K562 (cell line): ENCODE measurements at regions of chr15 and their contacts with region 1.

Region 1: GRCh38 chr15:56245871-56246814 is 2.5 kb upstream of the RFX7 start:
- DNase-seq: peak; percentile 79 to 94 (median 82)
- ATAC-seq: peak; percentile 79
- H3K4me3 ChIP-seq: peak overlapping the region; percentile 78
- H3K27ac ChIP-seq: peak overlapping the region; percentile 86
- H3K4me1 ChIP-seq: peaks cover 16 to 29% of the 10 kb centered on the region in 2 experiments
- H3K27me3 ChIP-seq: no peaks in the 10 kb centered on the region
- CTCF ChIP-seq: peak; percentile 100
- EP300 ChIP-seq: peak; percentile 66
- POLR2A ChIP-seq: peak; percentile 82
- RAD21 ChIP-seq: peak; percentile 94 to 96

Region 2: GRCh38 chr15:55564347-55565145 is 681.6 kb before region 1 on chr15:
- CTCF ChIA-PET with region 1: no interaction called
- POLR2A ChIA-PET with region 1: no interaction called
- in situ Hi-C with region 1: no loop called
- intact Hi-C with region 1: no loop called
- DNase-seq: peak in 1 of 4 experiments; percentile 10
- ATAC-seq: peak; percentile 87
- H3K4me3 ChIP-seq: no peak overlapping the region
- H3K27ac ChIP-seq: no peak overlapping the region
- H3K4me1 ChIP-seq: no peaks in the 10 kb centered on the region
- H3K27me3 ChIP-seq: no peaks in the 10 kb centered on the region
- CTCF ChIP-seq: peak; percentile 13 to 41 (median 32); a peak in 2 of 6 replicates
- EP300 ChIP-seq: no peak
- POLR2A ChIP-seq: no peak
- RAD21 ChIP-seq: no peak

Region 3: GRCh38 chr15:55789066-55789660 is 457.0 kb before region 1 on chr15:
- CTCF ChIA-PET with region 1: no interaction called
- POLR2A ChIA-PET with region 1: no interaction called
- in situ Hi-C with region 1: no loop called
- intact Hi-C with region 1: loop called (anchors 10 kb)
- DNase-seq: peak; percentile 59 to 72 (median 69)
- ATAC-seq: peak; percentile 95
- H3K4me3 ChIP-seq: no peak overlapping the region
- H3K27ac ChIP-seq: no peak overlapping the region
- H3K4me1 ChIP-seq: no peaks in the 10 kb centered on the region
- H3K27me3 ChIP-seq: no peaks in the 10 kb centered on the region; a peak in 1 of 5 replicates
- CTCF ChIP-seq: peak; percentile 66 to 92 (median 72)
- EP300 ChIP-seq: no peak
- POLR2A ChIP-seq: no peak
- RAD21 ChIP-seq: peak in 1 of 2 experiments; percentile 58; a peak in 2 of 4 replicates

Region 4: GRCh38 chr15:55993111-55993803 is 252.9 kb before region 1 on chr15 and contains the start of gene NEDD4:
- CTCF ChIA-PET with region 1: no interaction called
- POLR2A ChIA-PET with region 1: interaction called, 5 read pairs
- in situ Hi-C with region 1: no loop called
- intact Hi-C with region 1: loop called (anchors 5 kb)
- DNase-seq: peak; percentile 83 to 93 (median 87)
- ATAC-seq: peak; percentile 95
- H3K4me3 ChIP-seq: peak within 1 kb of the TSS; percentile 85
- H3K27ac ChIP-seq: peak within 1 kb of the TSS; percentile 85
- H3K4me1 ChIP-seq: peaks cover 3 to 18% of the 10 kb centered on the region in 2 experiments; a peak in 4 of 5 replicates
- H3K27me3 ChIP-seq: no peaks in the 10 kb centered on the region
- CTCF ChIP-seq: peak; percentile 49 to 71 (median 63)
- EP300 ChIP-seq: no peak
- POLR2A ChIP-seq: peak; percentile 82
- RAD21 ChIP-seq: no peak; a peak in 1 of 4 replicates
- polyA plus RNA-seq, gene NEDD4: 7.2 to 12.2 TPM

Region 5: GRCh38 chr15:56098195-56098863 is 147.8 kb before region 1 on chr15:
- CTCF ChIA-PET with region 1: no interaction called
- POLR2A ChIA-PET with region 1: no interaction called
- in situ Hi-C with region 1: no loop called
- intact Hi-C with region 1: loop called (anchors 10 kb)
- DNase-seq: no peak
- ATAC-seq: no peak
- H3K4me3 ChIP-seq: no peak overlapping the region
- H3K27ac ChIP-seq: no peak overlapping the region
- H3K4me1 ChIP-seq: no peaks in the 10 kb centered on the region
- H3K27me3 ChIP-seq: no peaks in the 10 kb centered on the region
- CTCF ChIP-seq: peak in 1 of 3 experiments; percentile 19; a peak in 1 of 6 replicates
- EP300 ChIP-seq: no peak
- POLR2A ChIP-seq: no peak
- RAD21 ChIP-seq: peak; percentile 37

Region 6: DNA sequence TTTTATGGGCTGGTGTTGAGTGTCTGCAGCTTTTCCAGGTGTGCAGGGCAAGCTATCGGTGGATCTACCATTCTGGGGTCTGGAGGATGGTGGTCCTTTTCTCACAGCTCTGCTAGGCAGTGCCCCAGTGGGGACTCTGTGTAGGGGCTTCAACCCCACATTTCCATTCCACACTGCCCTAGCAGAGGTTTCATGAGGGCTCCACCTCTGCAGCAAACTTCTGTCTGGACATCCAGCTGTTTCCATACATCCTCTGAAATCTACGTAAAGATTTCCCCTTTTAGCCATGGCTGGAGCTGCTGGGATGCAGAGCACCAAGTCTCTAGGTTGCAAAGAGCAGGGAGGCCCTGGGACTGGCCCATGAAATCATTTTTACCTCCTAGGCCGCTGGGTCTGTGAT is 14.1 kb before region 1 on chr15:
- CTCF ChIA-PET with region 1: no interaction called
- POLR2A ChIA-PET with region 1: no interaction called
- in situ Hi-C with region 1: no loop called
- intact Hi-C with region 1: no loop called
- DNase-seq: peak in 1 of 4 experiments; percentile 28
- ATAC-seq: no peak
- H3K4me3 ChIP-seq: no peak overlapping the region
- H3K27ac ChIP-seq: no peak overlapping the region
- H3K4me1 ChIP-seq: no peaks in the 10 kb centered on the region
- H3K27me3 ChIP-seq: no peaks in the 10 kb centered on the region
- CTCF ChIP-seq: no peak
- EP300 ChIP-seq: no peak
- POLR2A ChIP-seq: no peak
- RAD21 ChIP-seq: no peak

Region 7: DNA sequence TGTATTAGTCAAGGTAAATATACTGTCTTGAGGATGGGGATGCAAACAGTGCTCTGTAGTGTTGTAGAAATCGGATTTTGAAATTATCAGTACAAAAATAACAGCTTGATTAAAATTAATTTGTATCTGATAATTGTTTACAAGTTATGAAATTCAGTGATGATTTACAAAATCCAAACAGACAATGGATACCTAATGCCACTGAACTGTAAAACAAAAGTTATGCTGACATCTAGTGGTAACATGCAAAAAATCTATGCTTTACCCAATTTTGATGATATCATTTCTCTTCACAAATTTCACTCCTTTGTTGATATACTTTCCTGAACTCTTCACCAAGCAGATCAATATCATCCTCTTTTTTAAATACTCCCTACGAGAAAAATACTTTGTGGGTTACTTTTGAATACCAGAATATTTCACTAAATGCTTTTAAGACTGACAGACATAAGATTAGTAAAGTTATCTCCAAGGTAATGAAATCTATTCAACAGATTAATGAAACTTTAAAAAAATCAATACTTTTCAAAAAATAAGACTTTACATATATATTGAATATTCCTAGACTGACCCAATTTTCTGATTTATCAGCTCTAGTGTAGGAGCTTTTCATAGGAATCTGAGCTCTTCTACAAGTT is 182.8 kb after region 1 on chr15:
- CTCF ChIA-PET with region 1: interaction called, 21 read pairs
- POLR2A ChIA-PET with region 1: interaction called, 3 read pairs
- in situ Hi-C with region 1: loop called (anchors 5 kb)
- intact Hi-C with region 1: loop called (anchors 1 kb)
- DNase-seq: peak; percentile 8 to 36 (median 16)
- ATAC-seq: 0 out of 3 replicates have a peak, but pooled peaks have one; percentile 60
- H3K4me3 ChIP-seq: no peak overlapping the region
- H3K27ac ChIP-seq: no peak overlapping the region
- H3K4me1 ChIP-seq: no peaks in the 10 kb centered on the region
- H3K27me3 ChIP-seq: no peaks in the 10 kb centered on the region
- CTCF ChIP-seq: peak in 2 of 3 experiments; percentile 45 to 80; a peak in 4 of 6 replicates
- EP300 ChIP-seq: no peak
- POLR2A ChIP-seq: no peak
- RAD21 ChIP-seq: peak; percentile 81 to 97